ENCODE measurements at regions of chr4 and their contacts with region 1.

Region 1: DNA sequence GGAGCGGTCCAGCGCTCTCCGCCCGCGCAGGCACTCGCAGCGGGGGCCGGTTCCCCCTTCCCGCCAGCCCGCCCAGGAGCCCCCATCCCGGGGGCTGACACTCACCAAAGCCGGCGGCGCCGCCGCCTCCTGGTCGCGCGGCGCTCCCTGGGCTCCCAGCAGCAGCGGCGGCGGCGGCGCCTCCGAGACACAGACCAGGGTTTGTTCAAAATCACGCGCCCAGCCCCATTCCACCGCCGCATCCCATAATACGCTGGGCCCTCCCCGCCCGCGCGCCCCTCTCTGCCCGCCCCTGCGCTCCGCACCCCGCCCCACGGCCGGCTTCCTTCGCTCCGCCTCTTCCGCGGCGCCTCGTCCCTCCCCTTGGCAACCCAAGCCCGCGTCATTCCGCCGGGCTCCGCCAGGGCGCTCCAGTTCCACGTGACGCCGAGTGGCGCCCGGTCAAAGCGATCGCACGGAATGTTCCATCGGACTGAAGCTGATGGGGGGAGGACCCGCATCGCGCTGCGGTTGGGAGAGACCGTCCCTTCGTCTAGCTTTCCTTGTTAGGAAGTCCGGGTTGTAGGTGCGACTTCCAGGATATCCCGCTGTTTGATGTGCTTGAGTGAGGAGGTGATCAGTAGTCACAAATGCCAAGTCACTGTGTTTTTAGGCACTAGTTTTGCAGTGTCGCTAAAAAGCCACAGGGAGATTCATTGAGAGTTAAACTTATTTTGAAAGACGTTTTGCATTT is 2.2 kb upstream of the LIN54 start:
- DNase-seq: peak; percentile 93 to 97 (median 96)
- ATAC-seq: peak; percentile 74 to 81
- H3K4me3 Mint-ChIP-seq: peak overlapping the region; percentile 90 to 98 (median 95)
- H3K27ac Mint-ChIP-seq: peak overlapping the region; percentile 85 to 98 (median 93)
- H3K4me1 Mint-ChIP-seq: peaks cover 22 to 49% (median 45%) of the 10 kb centered on the region in 4 donors
- H3K27me3 Mint-ChIP-seq: no peaks in the 10 kb centered on the region

Region 2: DNA sequence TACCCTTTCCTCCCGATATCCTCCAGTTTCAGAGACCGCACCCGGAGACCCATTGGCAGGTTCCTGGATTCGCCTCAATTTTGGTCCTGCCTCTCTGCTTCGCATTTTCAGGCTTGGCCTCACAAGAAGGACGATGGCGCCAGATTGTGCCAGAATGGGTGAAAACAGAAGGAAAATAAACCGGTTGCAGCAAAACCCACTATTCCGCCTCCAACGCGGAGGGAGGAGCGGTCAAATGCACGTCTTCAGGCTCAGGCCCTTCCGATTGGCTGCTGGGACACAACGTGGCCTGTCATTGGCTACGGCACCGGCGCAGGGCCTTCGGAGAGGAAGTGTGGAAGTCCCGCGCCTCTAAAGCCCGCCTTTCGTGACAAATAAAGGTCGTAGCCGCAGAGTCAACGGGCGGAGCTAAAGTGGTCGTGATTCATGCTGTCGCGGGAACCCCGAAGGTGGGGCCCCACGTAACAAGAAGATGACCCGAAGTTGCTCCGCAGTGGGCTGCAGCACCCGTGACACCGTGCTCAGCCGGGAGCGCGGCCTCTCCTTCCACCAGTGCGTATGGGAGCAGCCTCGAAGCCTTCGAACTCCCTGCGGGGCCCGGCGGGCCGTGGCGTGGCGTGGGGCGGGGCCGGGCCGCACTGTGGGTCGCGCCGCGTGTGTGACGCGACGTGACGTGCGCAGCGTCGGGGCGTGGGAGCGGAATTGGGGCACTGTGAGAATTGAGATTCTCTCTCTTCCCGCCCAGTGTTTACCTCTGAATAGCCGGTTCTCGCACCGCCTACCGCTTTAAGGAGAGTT is 112.3 kb before region 1 on chr4 and contains the start of gene THAP9:
- POLR2A ChIA-PET with region 1: interaction called, 16 read pairs
- DNase-seq: peak; percentile 90 to 100 (median 98)
- ATAC-seq: peak; percentile 88 to 90
- H3K4me3 Mint-ChIP-seq: no peak within 1 kb of the TSS
- H3K27ac Mint-ChIP-seq: no peak within 1 kb of the TSS
- H3K4me1 Mint-ChIP-seq: peaks cover 12 to 30% (median 18%) of the 10 kb centered on the region in 4 donors
- H3K27me3 Mint-ChIP-seq: no peaks in the 10 kb centered on the region
- polyA plus RNA-seq, gene THAP9: 1.6 to 2.9 (median 1.7) TPM

Region 3: DNA sequence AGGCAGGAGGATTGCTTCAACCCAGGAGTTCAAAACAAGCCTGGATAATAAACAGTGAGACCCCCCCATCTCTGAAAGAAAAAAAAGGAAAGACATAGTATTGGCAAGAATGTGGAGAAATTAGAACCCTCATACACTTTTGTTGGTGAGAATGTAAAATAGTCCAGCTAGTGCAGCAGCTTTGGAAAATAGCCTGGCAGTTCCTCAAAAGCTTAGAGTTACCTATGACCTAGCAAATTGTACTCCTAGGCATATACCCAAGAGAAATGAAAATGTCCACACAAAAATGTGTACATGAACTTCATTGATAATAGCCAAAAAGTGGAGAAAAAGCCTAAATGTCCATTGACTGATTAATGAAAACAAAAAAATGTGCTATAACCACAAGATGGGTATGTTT is 91.1 kb before region 1 on chr4:
- POLR2A ChIA-PET with region 1: no interaction called
- DNase-seq: no peak
- ATAC-seq: no peak
- H3K4me3 Mint-ChIP-seq: no peak overlapping the region
- H3K27ac Mint-ChIP-seq: no peak overlapping the region
- H3K4me1 Mint-ChIP-seq: peaks cover 0 to 1% (median 0%) of the 10 kb centered on the region in 4 donors
- H3K27me3 Mint-ChIP-seq: no peaks in the 10 kb centered on the region

Region 4: DNA sequence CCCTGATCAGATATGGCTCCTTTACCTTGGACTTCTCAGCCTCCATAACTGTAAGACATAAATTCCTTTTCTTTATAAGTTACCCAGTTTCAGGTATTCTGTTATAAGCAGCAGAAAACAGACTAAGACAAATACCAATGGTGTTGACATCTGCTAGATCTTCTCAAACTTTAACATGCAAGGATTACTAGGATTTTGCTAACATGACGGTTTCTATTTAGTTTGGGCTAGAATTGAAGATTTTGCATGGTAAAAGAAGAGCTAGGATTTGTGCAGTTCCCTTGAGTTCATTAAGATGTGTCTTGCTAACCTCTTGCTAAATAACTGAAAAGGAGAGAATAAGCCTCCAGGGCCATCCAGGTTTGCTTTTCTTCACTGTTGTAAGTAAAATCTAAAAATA is 16.8 kb after region 1 on chr4:
- POLR2A ChIA-PET with region 1: interaction called, 65 read pairs
- DNase-seq: no peak
- ATAC-seq: no peak
- H3K4me3 Mint-ChIP-seq: no peak overlapping the region
- H3K27ac Mint-ChIP-seq: no peak overlapping the region
- H3K4me1 Mint-ChIP-seq: peaks cover 0 to 11% (median 2%) of the 10 kb centered on the region in 4 donors
- H3K27me3 Mint-ChIP-seq: peaks cover 0 to 2% (median 0%) of the 10 kb centered on the region in 5 donors

Region 5: DNA sequence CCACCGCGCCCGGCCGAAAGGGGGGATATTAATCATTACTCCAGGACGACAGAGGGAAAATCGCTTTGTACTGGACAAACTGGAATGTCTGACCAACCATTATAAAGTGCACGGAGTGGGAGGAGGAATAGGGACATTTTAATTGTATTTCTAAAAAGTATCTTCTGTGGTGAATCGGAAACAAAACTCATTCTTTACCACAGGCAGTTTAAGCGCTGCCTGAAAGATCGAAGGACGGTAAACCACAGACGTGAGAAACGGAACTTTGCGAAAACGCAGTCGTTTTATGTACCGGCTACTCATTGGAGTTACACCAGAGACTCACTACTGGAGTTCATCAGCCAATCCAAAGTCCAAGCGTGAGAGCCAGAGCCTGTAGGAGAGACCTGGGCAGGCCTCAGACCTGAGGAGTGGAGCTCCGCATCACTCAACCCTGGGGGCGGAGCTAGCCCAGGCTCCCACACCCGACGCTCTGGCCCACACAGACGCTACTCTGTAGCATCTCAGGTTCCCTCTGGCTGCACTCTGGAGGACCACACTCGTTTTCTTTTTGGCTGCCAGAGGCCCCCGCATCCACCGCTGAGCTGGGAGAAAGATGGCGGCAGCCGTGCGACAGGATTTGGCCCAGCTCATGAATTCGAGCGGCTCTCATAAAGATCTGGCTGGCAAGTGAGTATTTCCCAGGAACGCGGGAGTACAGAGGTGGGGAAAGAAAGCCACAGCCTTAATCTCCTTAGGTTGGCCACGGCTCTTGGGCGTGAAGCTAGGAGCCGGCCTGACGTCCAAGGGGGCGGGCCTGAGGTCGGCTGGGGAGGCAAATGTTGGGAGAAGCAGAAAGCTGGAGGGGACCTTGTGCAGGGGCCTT is 22.0 kb after region 1 on chr4 and contains the start of gene COPS4:
- POLR2A ChIA-PET with region 1: interaction called, 65 read pairs
- DNase-seq: peak; percentile 83 to 98 (median 95)
- ATAC-seq: peak; percentile 94 to 96
- H3K4me3 Mint-ChIP-seq: peak within 1 kb of the TSS; percentile 91 to 100 (median 100)
- H3K27ac Mint-ChIP-seq: peak within 1 kb of the TSS; percentile 97 to 100 (median 99)
- H3K4me1 Mint-ChIP-seq: peaks cover 9 to 47% (median 36%) of the 10 kb centered on the region in 4 donors
- H3K27me3 Mint-ChIP-seq: peaks cover 0 to 1% (median 0%) of the 10 kb centered on the region in 5 donors
- polyA plus RNA-seq, gene COPS4: 58.4 to 62.5 (median 61.2) TPM